ENCODE measurements at regions of chr17 and their contacts with region 1.

Region 1: DNA sequence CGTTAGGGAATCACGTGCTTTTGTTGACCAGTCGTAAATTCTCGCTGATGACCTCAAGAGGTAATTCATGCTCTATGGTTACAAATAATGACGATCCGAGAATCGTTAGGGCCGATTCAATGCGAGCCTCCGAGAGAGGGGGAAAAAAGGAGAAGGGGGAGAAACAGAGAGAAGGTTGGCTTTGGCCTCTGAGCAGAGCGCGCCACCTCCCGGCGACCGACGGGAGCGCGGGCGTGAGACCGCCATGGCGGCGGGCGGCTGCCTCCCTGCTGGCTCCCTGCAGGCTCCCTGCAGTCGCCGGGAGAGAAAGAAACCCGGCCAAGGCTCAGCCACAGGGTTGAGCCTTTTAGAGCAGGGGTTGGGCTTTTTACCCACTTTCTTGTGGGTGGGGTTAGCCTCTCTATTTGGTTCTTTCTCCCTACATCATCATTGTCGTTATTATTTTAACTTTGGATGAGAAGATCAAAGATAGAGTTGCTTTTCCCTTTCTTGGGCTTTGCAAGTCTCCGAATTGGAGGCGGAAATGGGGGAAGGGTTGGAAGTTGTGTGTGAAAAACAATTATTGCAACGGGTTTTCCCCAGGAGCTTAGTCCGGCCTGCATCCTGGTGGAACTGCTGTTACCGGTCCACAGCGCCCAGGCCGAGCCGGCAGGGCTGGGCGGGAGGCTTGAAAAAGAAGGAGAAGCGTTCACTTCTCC is 410 bp upstream of the HOXB5 start:
- DNase-seq: peak; percentile 79
- H3K4me3 ChIP-seq: peak overlapping the region in 3 of 4 donors; percentile 31 to 64 (median 43)
- H3K27ac ChIP-seq: peak overlapping the region; percentile 89 to 95 (median 92)
- H3K4me1 ChIP-seq: peaks cover 8 to 80% (median 40%) of the 10 kb centered on the region in 4 donors
- H3K27me3 ChIP-seq: peaks cover 5% of the 10 kb centered on the region
- CTCF ChIP-seq: peak; percentile 76 to 85 (median 79)
- EP300 ChIP-seq: no peak
- POLR2A ChIP-seq: no peak

Region 2: DNA sequence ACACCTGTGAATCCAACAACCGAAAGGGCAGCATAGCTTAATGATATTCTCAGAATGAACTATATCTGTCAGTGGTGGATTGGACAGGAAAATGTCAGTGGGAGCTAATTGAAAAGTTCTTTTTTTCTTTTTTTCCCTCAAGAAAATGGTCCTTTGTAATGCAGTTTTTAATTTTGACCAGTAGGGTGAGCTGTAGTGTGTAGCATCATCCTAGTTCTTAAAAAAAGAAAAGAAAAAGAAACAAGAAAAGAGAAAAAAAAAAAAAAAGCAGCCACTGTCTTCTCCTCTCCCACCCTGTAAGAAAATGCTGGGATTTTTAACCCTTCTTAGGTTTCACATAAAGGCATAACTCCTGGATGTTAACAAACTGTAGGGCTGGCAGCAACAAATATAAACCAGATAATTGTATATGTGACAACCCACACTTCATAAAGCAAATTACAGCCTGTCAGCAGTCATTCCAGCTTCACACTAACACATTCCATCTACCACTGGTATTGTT is 242.1 kb before region 1 on chr17:
- in situ Hi-C with region 1: loop called in 2 of 4 experiments (anchors 10 kb)
- intact Hi-C with region 1: loop called (anchors 5 kb)
- DNase-seq: no peak
- H3K4me3 ChIP-seq: no peak overlapping the region
- H3K27ac ChIP-seq: no peak overlapping the region
- H3K4me1 ChIP-seq: peaks cover 0 to 6% (median 0%) of the 10 kb centered on the region in 4 donors
- H3K27me3 ChIP-seq: peaks cover 11% of the 10 kb centered on the region
- CTCF ChIP-seq: peak; percentile 52 to 74 (median 67)
- EP300 ChIP-seq: no peak
- POLR2A ChIP-seq: no peak

Region 3: GRCh38 chr17:48382989-48383388 is 211.0 kb before region 1 on chr17:
- in situ Hi-C with region 1: no loop called
- intact Hi-C with region 1: no loop called
- DNase-seq: no peak
- H3K4me3 ChIP-seq: no peak overlapping the region
- H3K27ac ChIP-seq: no peak overlapping the region
- H3K4me1 ChIP-seq: no peaks in the 10 kb centered on the region
- H3K27me3 ChIP-seq: peaks cover 30% of the 10 kb centered on the region
- CTCF ChIP-seq: no peak
- EP300 ChIP-seq: no peak
- POLR2A ChIP-seq: no peak

Region 4: GRCh38 chr17:48393283-48393682 is 200.7 kb before region 1 on chr17:
- in situ Hi-C with region 1: no loop called
- intact Hi-C with region 1: no loop called
- DNase-seq: no peak
- H3K4me3 ChIP-seq: no peak overlapping the region
- H3K27ac ChIP-seq: no peak overlapping the region
- H3K4me1 ChIP-seq: peaks cover 0 to 13% (median 0%) of the 10 kb centered on the region in 4 donors
- H3K27me3 ChIP-seq: peaks cover 15% of the 10 kb centered on the region
- CTCF ChIP-seq: no peak
- EP300 ChIP-seq: no peak
- POLR2A ChIP-seq: no peak

Region 5: DNA sequence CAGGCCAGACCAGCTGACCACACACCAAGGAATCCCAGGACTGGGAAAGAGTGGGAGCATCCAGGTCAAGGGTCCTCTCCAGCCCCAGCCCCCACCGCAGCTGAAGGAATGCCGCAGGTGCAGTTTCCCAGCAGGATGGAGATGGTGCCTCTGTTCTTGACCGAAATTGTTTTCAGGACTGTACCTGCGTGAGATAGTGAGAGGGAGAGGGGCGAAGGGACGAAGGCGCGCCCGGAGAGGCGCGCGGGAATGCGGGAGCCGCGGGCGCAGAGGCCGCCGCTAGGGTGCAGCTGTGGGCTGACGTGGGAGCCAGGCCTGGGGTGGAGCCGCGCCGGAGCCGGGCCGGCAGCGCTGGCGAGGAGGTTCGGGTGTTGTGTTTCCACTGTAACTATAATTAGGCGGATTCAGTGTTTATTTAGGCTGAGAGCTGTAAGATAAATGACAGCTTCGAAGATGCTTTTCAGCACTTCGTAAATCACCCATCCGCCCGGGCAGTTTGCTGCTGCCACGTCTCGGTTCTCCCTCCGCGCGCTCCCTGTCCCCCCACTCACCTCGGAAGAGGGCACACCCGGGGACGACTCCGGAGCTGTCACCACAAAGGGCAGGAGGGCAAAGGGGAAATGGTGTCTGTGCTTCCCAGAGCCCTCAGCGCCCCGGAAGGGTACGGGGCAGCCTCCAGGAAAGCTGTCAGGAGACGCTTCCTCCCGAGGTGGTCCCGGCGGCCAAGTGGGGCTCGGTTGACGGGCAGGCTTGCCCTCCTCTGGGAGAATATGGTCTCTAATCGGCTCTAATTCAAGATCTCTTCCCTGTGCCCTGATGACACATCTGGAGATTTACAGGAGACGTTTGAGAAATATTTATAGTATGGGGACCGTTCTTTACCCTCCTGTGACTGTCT is 101.3 kb before region 1 on chr17:
- in situ Hi-C with region 1: loop called in 2 of 4 experiments (anchors 5 to 10 kb)
- intact Hi-C with region 1: no loop called
- DNase-seq: peak; percentile 80
- H3K4me3 ChIP-seq: peak overlapping the region in 3 of 4 donors; percentile 10 to 37 (median 14)
- H3K27ac ChIP-seq: peak overlapping the region; percentile 17 to 32 (median 26)
- H3K4me1 ChIP-seq: peaks cover 9 to 26% (median 13%) of the 10 kb centered on the region in 4 donors
- H3K27me3 ChIP-seq: peaks cover 6% of the 10 kb centered on the region
- CTCF ChIP-seq: peak; percentile 85 to 90 (median 88)
- EP300 ChIP-seq: no peak
- POLR2A ChIP-seq: no peak

Region 6: GRCh38 chr17:48636177-48637018 is 42.4 kb after region 1 on chr17:
- in situ Hi-C with region 1: no loop called
- intact Hi-C with region 1: no loop called
- DNase-seq: peak; percentile 89
- H3K4me3 ChIP-seq: peak overlapping the region in 1 of 4 donors; percentile 25
- H3K27ac ChIP-seq: peak overlapping the region; percentile 83 to 93 (median 88)
- H3K4me1 ChIP-seq: peaks cover 0 to 82% (median 53%) of the 10 kb centered on the region in 4 donors
- H3K27me3 ChIP-seq: peaks cover 97% of the 10 kb centered on the region
- CTCF ChIP-seq: peak; percentile 55 to 70 (median 67)
- EP300 ChIP-seq: no peak
- POLR2A ChIP-seq: no peak

Region 7: DNA sequence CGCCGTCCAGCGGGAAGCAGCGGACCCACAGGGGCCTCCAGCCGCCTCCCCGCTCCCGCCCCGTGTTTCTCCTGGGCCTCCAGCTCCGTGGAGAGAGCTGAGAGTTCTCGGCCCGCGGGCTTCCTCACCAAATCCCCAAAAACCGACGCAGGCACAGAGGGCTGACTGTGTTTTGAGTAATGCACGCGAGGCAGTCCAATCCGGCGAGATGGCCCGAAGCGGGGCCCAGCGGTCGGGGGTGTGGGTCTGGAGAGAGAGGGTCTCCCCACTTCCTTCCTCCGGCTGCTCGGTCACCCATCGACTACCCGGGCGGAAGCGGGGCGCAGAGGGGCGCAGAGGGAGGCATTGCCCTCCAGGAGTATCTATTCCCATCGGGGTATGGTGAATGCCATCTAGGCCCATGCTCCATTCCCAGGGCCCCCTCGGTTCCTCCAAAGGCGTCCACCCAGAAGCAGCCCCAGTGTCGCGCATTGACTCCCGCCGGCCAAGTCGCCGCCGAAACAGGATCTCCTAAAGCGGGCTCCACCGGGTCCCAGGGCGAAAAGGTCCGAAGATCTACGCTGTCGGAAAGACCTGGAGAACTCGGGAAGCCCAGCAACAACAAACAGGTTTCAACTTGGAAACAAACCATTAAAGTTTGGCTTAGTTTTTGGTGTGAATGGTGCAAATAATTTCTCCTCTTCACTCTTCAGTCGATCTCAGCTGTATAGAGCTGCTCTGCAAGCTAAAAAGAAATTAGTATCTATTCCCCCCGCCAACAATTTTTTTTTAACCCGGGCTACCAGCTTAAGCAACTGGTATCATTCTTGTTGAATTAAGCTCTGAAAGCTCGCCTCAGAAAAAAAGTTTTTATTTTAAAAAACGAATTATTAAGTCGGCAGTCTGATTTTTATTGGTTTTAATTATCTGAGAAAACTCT is 153.7 kb after region 1 on chr17:
- in situ Hi-C with region 1: no loop called
- intact Hi-C with region 1: no loop called
- DNase-seq: no peak
- H3K4me3 ChIP-seq: no peak overlapping the region
- H3K27ac ChIP-seq: no peak overlapping the region
- H3K4me1 ChIP-seq: peaks cover 0 to 6% (median 3%) of the 10 kb centered on the region in 4 donors
- H3K27me3 ChIP-seq: peaks cover 100% of the 10 kb centered on the region
- CTCF ChIP-seq: no peak
- EP300 ChIP-seq: no peak
- POLR2A ChIP-seq: no peak